Activated CD8-positive, alpha-beta memory T cell treated with anti-CD3 and anti-CD28 coated beads, Interleukin-2, amount 10 ng/mL, durations not matched to agents 7 days and 5 days (primary cell): ENCODE measurements at regions of chr17 and their contacts with region 1.

Region 1: DNA sequence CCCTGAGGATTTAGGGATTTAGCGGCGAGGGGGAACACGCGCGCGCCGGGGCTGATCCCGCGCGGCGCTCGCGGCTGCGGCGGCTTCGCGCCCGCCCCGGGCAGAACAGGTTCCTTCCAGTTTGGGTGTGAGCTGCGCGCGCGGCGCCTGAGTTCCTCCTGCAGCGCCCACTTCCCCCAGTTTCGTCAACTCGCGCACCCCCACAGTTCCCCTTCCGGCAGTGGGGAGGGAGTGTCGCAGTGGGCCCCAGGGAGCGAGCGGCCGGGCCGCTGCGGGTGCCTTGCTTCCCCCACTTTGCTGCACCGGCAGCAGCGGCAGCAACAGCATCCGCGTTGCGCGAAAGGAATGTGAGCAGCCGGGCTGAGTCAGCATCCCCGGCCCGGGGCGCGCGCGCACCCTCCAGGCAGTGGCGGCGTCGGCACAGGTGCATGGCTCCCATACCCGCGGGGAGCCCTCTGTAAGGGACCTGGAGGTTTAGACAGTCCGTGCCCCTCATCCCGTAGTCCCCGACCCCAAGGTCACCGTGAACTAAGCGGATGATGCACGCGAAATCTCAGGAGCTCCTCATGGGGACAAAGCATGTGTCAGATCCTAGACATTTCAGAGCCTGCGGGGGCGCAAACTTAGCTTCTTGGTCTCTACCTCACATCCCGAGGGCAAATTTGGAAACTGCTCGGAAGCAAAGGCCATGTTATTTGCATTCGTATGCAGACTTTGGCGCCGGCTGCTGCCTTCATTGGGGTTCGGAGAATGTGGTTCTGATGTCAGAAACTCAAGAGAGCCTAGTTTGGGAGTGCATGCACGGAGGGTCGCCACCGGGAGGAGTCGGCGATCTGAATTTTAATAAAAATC is 775 bp downstream of the ARSG start:
- DNase-seq: peak; percentile 98
- ATAC-seq: peak; percentile 81
- H3K4me3 Mint-ChIP-seq: peak overlapping the region; percentile 81
- H3K27ac Mint-ChIP-seq: peak overlapping the region; percentile 96
- H3K4me1 Mint-ChIP-seq: peaks cover 68% of the 10 kb centered on the region
- H3K27me3 Mint-ChIP-seq: peaks cover 2% of the 10 kb centered on the region

Region 2: GRCh38 chr17:68346448-68346847 is 54.4 kb after region 1 on chr17:
- CTCF ChIA-PET with region 1: interaction called, 17 read pairs
- DNase-seq: peak; percentile 93
- ATAC-seq: peak; percentile 69
- H3K4me3 Mint-ChIP-seq: peak overlapping the region; percentile 61
- H3K27ac Mint-ChIP-seq: peak overlapping the region; percentile 99
- H3K4me1 Mint-ChIP-seq: peaks cover 80% of the 10 kb centered on the region
- H3K27me3 Mint-ChIP-seq: no peaks in the 10 kb centered on the region

Region 3: GRCh38 chr17:68356520-68356919 is 64.5 kb after region 1 on chr17:
- CTCF ChIA-PET with region 1: interaction called, 19 read pairs
- DNase-seq: peak; percentile 92
- ATAC-seq: peak; percentile 90
- H3K4me3 Mint-ChIP-seq: peak overlapping the region; percentile 74
- H3K27ac Mint-ChIP-seq: peak overlapping the region; percentile 95
- H3K4me1 Mint-ChIP-seq: peaks cover 79% of the 10 kb centered on the region
- H3K27me3 Mint-ChIP-seq: no peaks in the 10 kb centered on the region

Region 4: DNA sequence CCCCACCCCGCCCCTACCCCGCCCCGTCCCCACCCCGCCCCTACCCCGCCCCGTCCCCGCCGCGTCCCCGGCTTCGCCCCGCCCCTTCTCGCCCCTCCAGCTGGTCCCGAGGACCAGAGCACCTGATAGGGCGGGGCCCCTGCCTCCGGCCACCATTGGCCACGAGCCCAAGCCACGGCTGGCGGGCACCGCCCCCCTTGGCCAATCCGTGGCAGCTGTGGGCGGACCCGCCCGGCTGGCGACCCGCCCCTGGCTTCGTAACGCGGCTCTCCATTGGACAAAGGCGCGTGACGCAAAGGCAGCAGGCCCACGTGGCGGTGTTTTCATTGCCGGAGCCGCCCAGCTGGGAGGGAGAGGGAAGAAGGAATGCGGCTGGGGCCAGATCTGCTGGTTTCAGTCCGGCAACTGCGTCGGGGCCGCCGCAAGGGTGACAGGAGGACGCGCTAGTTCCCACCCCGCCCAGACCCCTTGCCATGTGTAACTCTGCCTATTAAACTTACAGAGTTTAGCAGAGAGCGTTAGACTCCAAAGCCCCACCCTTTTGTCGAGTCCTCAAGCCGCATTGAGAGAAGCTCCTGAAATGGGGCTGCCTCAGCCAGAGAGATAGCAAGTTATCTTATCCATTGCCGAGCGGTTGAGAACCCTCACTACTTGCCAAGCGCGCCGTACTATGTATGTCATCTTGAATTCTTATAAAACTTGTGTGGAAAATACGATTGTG is 165.6 kb after region 1 on chr17:
- CTCF ChIA-PET with region 1: interaction called, 12 read pairs
- DNase-seq: peak; percentile 99
- ATAC-seq: peak; percentile 94
- H3K4me3 Mint-ChIP-seq: peak overlapping the region; percentile 75
- H3K27ac Mint-ChIP-seq: peak overlapping the region; percentile 94
- H3K4me1 Mint-ChIP-seq: peaks cover 81% of the 10 kb centered on the region
- H3K27me3 Mint-ChIP-seq: no peaks in the 10 kb centered on the region